ENCODE measurements at regions of chr1 and their contacts with region 1.

Region 1: DNA sequence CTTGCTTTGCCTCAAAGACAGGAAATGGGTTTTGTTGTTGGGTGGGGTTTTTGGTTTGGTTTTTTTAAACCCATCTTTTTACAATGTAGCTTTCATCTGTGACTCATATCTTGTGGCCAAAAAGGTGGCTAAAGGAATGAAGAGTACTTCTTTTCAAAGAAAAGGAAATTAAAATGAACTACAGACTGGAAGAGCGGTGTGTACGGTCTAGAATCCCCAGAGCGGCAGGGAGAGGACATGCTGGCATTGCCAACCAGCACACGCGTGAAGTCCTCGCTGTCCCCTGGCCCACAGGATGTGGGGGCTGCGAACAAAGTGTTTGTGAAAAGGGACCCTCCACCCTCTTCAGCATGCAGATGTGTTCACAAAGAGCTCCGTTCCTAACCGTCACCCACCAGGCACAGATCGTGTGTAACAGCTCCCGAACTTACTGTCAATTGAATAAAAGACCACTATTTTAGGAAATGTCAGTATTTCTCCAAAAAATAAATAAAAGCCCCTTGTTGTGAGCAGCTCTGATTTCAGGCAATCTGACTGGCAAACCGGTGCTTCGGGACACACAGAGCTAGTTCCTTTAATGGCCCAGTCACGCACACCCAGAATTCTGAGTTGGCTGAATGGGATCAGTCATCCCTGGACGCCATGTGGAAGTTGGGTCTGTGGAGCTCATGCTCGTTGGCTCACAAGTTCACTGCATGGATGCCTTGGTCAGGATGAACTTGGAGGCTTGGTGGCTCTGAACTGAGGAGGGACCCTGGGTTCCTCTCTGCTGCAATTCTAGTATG is 602.9 kb downstream of the NPHP4 start:
- DNase-seq: no peak
- ATAC-seq: no peak
- H3K4me3 ChIP-seq: no peak overlapping the region
- H3K27ac ChIP-seq: peak overlapping the region in 1 of 10 donors; percentile 44
- H3K4me1 ChIP-seq: no peaks in the 10 kb centered on the region
- H3K27me3 ChIP-seq: peaks cover 0 to 64% (median 46%) of the 10 kb centered on the region in 7 donors
- CTCF ChIP-seq: no peak

Region 2: GRCh38 chr1:5338466-5338865 is 50.8 kb before region 1 on chr1:
- intact Hi-C with region 1: loop called in 1 of 10 experiments (anchors 5 kb)
- DNase-seq: no peak
- ATAC-seq: no peak
- H3K4me3 ChIP-seq: no peak overlapping the region
- H3K27ac ChIP-seq: no peak overlapping the region
- H3K4me1 ChIP-seq: no peaks in the 10 kb centered on the region
- H3K27me3 ChIP-seq: peaks cover 0 to 11% (median 2%) of the 10 kb centered on the region in 7 donors
- CTCF ChIP-seq: no peak

Region 3: DNA sequence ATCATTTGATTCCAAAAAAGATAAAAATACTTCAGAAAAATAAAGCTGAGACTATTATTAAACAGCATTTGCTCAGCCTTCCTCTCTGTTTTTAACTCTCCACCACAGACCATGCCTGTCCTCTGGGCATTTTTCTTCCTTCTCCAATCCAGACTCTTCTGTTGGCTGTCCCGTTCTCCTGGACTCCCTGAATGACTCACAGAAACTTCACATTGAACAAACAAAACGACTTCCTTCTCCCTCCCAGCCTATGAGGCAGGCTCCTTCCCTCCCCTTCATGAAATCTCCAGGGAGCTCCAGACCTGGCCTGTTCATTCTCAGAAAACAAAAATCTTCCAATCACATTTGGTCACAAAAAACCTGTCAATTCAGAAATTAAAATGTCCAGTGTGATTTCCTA is 181.6 kb after region 1 on chr1:
- intact Hi-C with region 1: no loop called
- DNase-seq: no peak
- ATAC-seq: no peak
- H3K4me3 ChIP-seq: no peak overlapping the region
- H3K27ac ChIP-seq: no peak overlapping the region
- H3K4me1 ChIP-seq: no peaks in the 10 kb centered on the region
- H3K27me3 ChIP-seq: peaks cover 0 to 9% (median 0%) of the 10 kb centered on the region in 7 donors
- CTCF ChIP-seq: no peak